ENCODE measurements at regions of chr1 and their contacts with region 1.

Region 1: GRCh38 chr1:41673378-41673777 is 188.9 kb upstream of the EDN2 start:
- DNase-seq: no peak
- H3K4me3 ChIP-seq: no peak overlapping the region; the same call in 1 of the 2 replicates
- CTCF ChIP-seq: no peak

Region 2: DNA sequence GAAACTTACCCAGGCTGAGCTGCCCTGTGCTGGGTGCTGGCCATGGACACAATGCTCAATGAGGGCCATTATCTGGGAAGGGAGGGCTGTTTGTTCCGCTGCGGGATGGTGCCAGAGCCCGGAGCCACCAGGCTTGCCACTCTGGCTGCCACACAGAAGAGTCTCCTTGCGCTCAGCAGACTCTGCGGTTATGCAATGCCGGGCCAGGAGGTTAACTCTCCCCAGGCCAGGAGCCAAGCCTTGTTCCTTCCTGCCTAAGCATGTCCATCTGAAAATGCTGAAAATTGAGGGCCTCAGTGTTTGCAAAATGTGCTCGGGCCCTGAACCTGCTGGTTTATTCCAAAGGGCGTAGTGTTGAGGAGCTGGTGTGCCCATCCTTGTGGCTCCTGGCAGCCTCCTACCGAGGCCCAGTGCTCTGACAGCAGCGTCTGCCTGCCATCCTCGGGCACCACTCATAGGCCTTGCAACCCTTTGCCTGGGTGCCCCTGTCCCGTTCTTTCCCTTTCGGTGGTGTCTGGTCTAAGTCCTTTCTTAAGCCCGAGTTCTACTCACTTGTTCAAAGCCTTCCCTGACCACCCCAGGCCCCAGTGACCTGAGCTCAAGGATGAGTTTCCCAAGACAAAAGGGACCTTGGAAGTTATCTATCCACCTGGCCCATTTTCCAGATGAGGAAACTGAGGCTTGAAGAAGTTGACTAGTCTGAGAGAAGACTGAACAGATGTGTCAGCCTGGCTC is 55.1 kb before region 1 on chr1:
- CTCF ChIA-PET with region 1: no interaction called
- POLR2A ChIA-PET with region 1: no interaction called
- DNase-seq: no peak
- H3K4me3 ChIP-seq: no peak overlapping the region
- CTCF ChIP-seq: no peak

Region 3: GRCh38 chr1:41645062-41645461 is 28.3 kb before region 1 on chr1:
- CTCF ChIA-PET with region 1: no interaction called
- POLR2A ChIA-PET with region 1: no interaction called
- DNase-seq: no peak
- H3K4me3 ChIP-seq: no peak overlapping the region
- CTCF ChIP-seq: no peak

Region 4: DNA sequence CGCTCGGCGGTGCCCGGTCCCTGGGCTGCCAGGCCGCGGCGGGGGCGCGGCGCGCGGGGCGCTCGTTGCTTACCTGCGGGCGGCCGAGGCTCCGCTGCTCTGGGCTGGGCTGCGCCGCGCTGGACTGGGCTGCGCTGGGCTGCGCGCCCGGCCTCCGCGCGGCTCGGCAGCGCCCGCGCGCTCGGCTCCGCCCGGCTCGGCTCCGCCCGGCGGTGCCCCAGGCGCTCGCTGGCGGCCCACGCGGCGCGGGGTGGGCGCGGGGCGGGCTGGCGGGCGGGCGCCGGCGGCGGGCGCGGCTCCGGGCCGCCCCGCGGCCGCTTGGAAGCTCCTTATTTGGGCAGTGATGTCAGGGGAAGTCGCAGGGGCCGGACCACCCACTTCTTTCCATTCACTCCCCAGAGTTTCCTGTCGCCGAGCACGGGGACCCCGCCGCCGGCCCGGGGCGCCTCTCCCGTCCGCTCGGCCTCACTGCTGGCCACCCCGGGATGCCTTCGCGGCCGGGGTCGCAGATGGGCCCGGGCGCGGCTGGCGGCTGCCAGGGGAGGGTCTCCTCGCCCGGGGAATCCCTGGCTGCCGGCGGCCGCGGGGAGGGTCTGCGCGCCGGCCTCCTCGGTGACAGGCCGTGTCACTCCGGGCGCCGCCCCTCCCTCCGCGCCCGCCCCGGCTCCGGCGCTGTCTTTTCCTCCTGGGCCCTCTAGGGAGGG is 11.2 kb before region 1 on chr1:
- CTCF ChIA-PET with region 1: interaction called, 6 read pairs
- POLR2A ChIA-PET with region 1: interaction called, 14 read pairs
- DNase-seq: no peak
- H3K4me3 ChIP-seq: peak overlapping the region; percentile 78
- CTCF ChIP-seq: no peak

Measured in AG04449 (cell line).